Testis (tissue), 5 donors: ENCODE measurements at regions of chr2 and their contacts with region 1.

Region 1: DNA sequence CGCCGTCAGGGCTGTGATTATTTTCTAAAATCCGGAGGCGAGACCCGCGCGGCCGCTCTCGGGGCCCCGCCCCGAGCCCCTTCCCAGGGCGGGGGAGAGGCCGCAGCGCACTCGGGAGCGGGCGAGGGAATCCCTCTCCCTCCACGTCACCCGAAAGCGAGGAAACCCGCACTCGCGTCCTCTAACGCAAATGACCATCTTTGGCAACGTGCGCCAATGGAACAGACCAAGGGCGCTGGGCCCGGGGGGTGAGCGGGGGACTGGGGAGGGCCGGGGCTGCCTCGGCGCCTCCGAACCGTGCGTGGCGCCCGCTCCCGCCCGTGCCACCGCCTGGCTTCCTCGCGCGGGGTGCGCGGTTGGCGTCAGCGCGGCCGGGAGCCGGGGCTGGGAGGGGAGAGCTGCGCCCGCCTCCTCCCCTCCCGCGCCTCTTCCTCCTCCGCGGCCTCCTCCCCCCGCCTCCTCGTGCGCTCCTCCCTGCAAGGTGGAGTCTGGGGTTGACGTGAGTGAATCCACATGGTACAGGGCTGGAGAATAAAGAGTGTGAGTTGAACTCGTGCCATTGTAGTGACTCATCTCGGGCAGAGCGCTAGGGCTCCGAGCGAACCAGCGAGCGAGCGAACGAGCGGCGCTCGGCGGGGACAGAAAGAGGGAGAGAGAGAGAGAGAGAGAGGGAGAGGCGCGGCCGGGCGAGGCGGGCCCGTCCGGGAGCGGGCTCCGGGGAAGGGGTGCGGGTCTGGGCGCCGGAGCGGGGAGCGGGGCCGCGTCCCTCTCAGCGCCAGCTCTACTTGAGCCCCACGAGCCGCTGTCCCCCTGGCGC is at the start of gene FOSL2:
- DNase-seq: peak; percentile 97
- H3K4me3 ChIP-seq: peak within 1 kb of the TSS; percentile 62 to 77
- H3K27ac ChIP-seq: peak within 1 kb of the TSS; percentile 99 to 100
- H3K4me1 ChIP-seq: peaks cover 25% of the 10 kb centered on the region
- H3K27me3 ChIP-seq: no peaks in the 10 kb centered on the region
- CTCF ChIP-seq: no peak
- POLR2A ChIP-seq: peak; percentile 96
- total RNA-seq, gene FOSL2: 24.3 to 39.7 TPM

Region 2: GRCh38 chr2:27705851-27706622 is 686.5 kb before region 1 on chr2:
- intact Hi-C with region 1: loop called (anchors 5 kb)
- DNase-seq: peak; percentile 76
- H3K4me3 ChIP-seq: no peak overlapping the region
- H3K27ac ChIP-seq: peak overlapping the region; percentile 93 to 97
- H3K4me1 ChIP-seq: peaks cover 41% of the 10 kb centered on the region
- H3K27me3 ChIP-seq: no peaks in the 10 kb centered on the region
- CTCF ChIP-seq: no peak
- POLR2A ChIP-seq: no peak

Region 3: GRCh38 chr2:27954771-27955383 is 437.6 kb before region 1 on chr2:
- intact Hi-C with region 1: loop called (anchors 10 kb)
- DNase-seq: peak; percentile 47
- H3K4me3 ChIP-seq: no peak overlapping the region
- H3K27ac ChIP-seq: peak overlapping the region; percentile 59 to 68
- H3K4me1 ChIP-seq: peaks cover 35% of the 10 kb centered on the region
- H3K27me3 ChIP-seq: no peaks in the 10 kb centered on the region
- CTCF ChIP-seq: peak in 2 of 3 experiments; percentile 27 to 29
- POLR2A ChIP-seq: no peak

Region 4: DNA sequence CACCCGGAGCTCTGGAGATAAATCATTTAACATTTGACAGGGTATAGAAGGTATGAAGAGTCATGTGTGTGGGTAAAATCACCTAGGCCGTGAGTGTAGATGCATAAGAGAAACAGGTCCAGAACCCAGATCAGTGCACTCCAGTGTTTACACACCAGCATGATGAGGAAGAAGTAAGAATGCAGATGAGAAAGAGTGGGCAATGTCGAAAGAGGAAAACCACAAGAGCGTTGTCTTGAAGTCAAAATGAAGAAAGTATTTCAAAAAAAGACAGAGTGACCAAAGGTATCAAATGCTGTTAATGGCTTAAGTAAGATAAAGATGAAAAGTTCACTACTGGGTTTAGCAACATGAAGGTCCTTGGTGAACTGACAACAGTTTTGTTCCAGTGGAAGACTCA is 71.4 kb after region 1 on chr2:
- intact Hi-C with region 1: no loop called
- DNase-seq: no peak
- H3K4me3 ChIP-seq: no peak overlapping the region
- H3K27ac ChIP-seq: no peak overlapping the region
- H3K4me1 ChIP-seq: no peaks in the 10 kb centered on the region
- H3K27me3 ChIP-seq: no peaks in the 10 kb centered on the region
- CTCF ChIP-seq: no peak
- POLR2A ChIP-seq: no peak